ENCODE measurements at regions of chr12 and their contacts with region 1.

Region 1: GRCh38 chr12:9906873-9907272 is 25.3 kb downstream of the CLEC2A start:
- DNase-seq: peak; percentile 70
- ATAC-seq: peak; percentile 97
- H3K4me3 Mint-ChIP-seq: peak overlapping the region; percentile 55
- H3K27ac Mint-ChIP-seq: peak overlapping the region; percentile 89
- H3K4me1 Mint-ChIP-seq: peaks cover 52% of the 10 kb centered on the region
- H3K27me3 Mint-ChIP-seq: no peaks in the 10 kb centered on the region

Region 2: DNA sequence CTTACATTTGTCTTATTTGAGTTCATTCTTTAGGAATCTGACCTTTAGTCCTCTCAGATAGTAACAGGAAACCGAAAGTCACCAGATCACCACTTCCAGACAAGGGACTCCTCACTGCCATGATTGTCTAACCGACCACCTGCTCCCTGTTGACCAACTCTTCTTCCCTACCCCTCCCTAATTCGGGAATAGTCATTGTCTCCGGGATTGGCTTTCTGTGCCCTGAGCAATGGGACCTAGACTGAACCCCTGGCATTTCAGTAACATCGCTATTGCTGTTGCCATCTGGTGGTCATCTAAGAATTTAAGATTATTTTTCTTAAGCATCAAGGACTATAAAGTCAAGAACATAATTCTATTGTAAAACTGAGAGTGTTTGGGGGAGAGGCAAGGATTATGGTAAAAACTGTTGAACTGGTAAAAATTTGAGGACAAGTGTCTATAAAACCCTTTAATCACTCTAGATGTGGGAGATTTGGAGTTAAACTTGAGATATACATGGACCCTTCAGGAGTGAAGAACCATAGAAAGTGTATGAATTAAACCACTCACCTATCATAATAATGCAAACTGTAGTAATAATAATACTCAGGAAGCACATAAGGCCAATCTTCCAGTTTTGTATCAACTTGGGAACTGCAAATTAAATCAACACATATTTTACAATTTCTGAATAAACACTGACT is 19.0 kb after region 1 on chr12:
- CTCF ChIA-PET with region 1: interaction called, 10 read pairs
- POLR2A ChIA-PET with region 1: no interaction called
- DNase-seq: peak; percentile 33
- ATAC-seq: peak; percentile 69
- H3K4me3 Mint-ChIP-seq: peak overlapping the region; percentile 60
- H3K27ac Mint-ChIP-seq: peak overlapping the region; percentile 77
- H3K4me1 Mint-ChIP-seq: peaks cover 37% of the 10 kb centered on the region
- H3K27me3 Mint-ChIP-seq: peaks cover 7% of the 10 kb centered on the region